ENCODE measurements at regions of chr20 and their contacts with region 1.

Region 1: DNA sequence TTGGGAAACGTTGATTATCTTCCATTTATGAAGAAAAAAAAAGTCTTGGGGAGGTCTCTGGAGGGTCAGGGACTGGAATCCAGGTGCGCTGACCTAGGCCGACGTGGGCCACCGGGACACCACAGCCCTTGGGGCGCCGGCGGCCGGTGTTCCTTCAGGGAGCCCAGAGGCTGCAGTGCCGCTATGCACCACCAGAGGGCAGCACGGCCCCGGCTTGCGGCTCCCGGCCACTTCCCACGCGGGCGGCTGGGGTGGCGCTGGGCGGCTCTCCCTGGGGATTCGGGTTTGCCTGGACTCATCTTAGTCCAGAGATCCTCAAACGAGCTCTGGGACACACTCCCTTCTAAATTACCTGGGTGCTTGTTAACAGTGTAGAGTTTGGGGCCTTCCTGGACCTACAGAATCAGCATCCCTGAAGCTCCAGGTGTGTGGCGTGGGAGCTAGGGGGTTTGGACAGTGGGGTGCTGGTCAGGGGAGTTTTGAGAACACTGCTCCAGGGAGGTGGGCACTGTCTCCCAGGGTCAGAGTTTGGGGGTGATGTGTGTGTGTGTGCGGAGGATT is 23.0 kb upstream of the GTSF1L start:
- DNase-seq: peak; percentile 78
- H3K4me3 ChIP-seq: no peak overlapping the region
- H3K27ac ChIP-seq: no peak overlapping the region
- H3K4me1 ChIP-seq: peaks cover 20% of the 10 kb centered on the region
- H3K27me3 ChIP-seq: no peaks in the 10 kb centered on the region
- CTCF ChIP-seq: peak; percentile 99

Region 2: DNA sequence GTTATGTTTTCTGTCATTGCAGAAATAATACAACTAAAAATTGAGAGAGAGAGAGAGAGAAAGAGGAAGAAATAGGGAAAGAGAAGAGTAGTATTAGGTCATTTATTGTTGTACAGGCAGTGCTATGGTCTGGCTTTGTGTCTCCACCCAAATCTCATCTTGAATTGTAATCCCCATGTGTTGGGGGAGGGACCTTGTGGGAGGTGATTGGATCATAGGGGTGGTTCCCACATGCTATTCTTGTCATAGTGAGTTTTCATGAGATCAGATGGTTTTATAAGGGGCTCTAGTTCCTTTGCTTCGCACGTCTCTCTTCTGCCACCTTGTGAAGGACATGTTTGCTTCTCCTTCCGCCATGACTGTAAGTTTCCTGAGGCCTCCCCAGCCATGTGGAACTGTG is 1454.2 kb before region 1 on chr20:
- CTCF ChIA-PET with region 1: no interaction called
- POLR2A ChIA-PET with region 1: no interaction called
- intact Hi-C with region 1: no loop called
- DNase-seq: peak; percentile 1
- H3K4me3 ChIP-seq: no peak overlapping the region
- H3K27ac ChIP-seq: no peak overlapping the region
- H3K4me1 ChIP-seq: no peaks in the 10 kb centered on the region
- H3K27me3 ChIP-seq: no peaks in the 10 kb centered on the region
- CTCF ChIP-seq: no peak

Region 3: DNA sequence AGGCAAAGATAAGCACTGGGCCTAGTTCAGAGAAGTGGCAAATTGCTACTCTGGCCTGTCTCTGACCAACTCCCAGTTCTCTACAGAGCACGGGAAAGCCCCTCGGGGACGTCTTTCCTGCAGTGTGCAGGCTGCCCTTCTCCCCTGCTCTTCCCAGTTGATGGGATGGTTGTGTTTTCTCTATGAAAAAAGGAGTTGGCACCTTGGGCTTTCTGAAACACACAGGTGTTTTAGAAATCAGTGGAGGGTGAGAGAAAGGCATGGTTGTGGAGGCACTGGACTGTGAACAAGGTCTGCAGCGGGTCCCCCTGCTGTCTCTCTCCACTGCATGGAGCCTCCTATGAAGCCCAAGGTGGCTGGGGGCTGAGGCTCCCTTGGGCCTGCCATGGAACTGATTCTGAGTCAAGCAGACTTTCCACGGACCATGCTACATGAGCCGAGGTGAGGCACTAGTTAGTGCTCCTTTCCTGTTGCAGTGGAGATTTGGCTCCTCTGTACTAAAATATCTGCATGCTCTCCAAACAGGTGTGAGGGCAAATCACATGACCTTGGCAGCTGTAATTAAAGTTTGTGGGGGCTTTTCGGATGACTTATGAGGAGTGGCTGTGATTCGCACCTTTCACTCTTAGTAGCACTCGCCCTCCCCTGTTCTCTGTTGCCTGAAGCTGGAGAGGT is 39.3 kb before region 1 on chr20:
- CTCF ChIA-PET with region 1: no interaction called
- POLR2A ChIA-PET with region 1: no interaction called
- intact Hi-C with region 1: no loop called
- DNase-seq: no peak
- H3K4me3 ChIP-seq: no peak overlapping the region
- H3K27ac ChIP-seq: no peak overlapping the region
- H3K4me1 ChIP-seq: no peaks in the 10 kb centered on the region
- H3K27me3 ChIP-seq: no peaks in the 10 kb centered on the region
- CTCF ChIP-seq: no peak

Region 4: GRCh38 chr20:43840382-43841070 is 90.7 kb after region 1 on chr20:
- CTCF ChIA-PET with region 1: no interaction called
- POLR2A ChIA-PET with region 1: no interaction called
- intact Hi-C with region 1: no loop called
- DNase-seq: peak; percentile 67
- H3K4me3 ChIP-seq: no peak overlapping the region
- H3K27ac ChIP-seq: no peak overlapping the region
- H3K4me1 ChIP-seq: peaks cover 5% of the 10 kb centered on the region
- H3K27me3 ChIP-seq: no peaks in the 10 kb centered on the region
- CTCF ChIP-seq: peak; percentile 67

Region 5: GRCh38 chr20:44014807-44015732 is 265.3 kb after region 1 on chr20:
- CTCF ChIA-PET with region 1: no interaction called
- POLR2A ChIA-PET with region 1: no interaction called
- intact Hi-C with region 1: no loop called
- DNase-seq: peak; percentile 47
- H3K4me3 ChIP-seq: no peak overlapping the region
- H3K27ac ChIP-seq: no peak overlapping the region
- H3K4me1 ChIP-seq: peaks cover 53% of the 10 kb centered on the region
- H3K27me3 ChIP-seq: no peaks in the 10 kb centered on the region
- CTCF ChIP-seq: no peak

Region 6: GRCh38 chr20:44080646-44081267 is 330.9 kb after region 1 on chr20:
- CTCF ChIA-PET with region 1: interaction called, 9 read pairs
- POLR2A ChIA-PET with region 1: interaction called, 7 read pairs
- intact Hi-C with region 1: loop called (anchors 1 kb)
- DNase-seq: peak; percentile 84
- H3K4me3 ChIP-seq: no peak overlapping the region
- H3K27ac ChIP-seq: peak overlapping the region; percentile 4
- H3K4me1 ChIP-seq: peaks cover 6% of the 10 kb centered on the region
- H3K27me3 ChIP-seq: no peaks in the 10 kb centered on the region
- CTCF ChIP-seq: peak; percentile 98

Region 7: GRCh38 chr20:44187051-44187762 is 437.4 kb after region 1 on chr20 and contains the start of gene JPH2:
- CTCF ChIA-PET with region 1: no interaction called
- POLR2A ChIA-PET with region 1: no interaction called
- intact Hi-C with region 1: loop called (anchors 10 kb)
- DNase-seq: no peak
- H3K4me3 ChIP-seq: peak within 1 kb of the TSS; percentile 47
- H3K27ac ChIP-seq: no peak within 1 kb of the TSS
- H3K4me1 ChIP-seq: peaks cover 2% of the 10 kb centered on the region
- H3K27me3 ChIP-seq: no peaks in the 10 kb centered on the region
- CTCF ChIP-seq: no peak
- total RNA-seq, gene JPH2: 1.0 and 1.1 TPM in 2 replicates